ENCODE measurements at regions of chr6 and their contacts with region 1.

Region 1: GRCh38 chr6:137399881-137400443 is 94.2 kb downstream of the OLIG3 start:
- DNase-seq: no peak
- H3K4me3 Mint-ChIP-seq: no peak overlapping the region
- H3K27ac Mint-ChIP-seq: peak overlapping the region; percentile 38
- H3K4me1 Mint-ChIP-seq: peaks cover 18% of the 10 kb centered on the region
- H3K27me3 Mint-ChIP-seq: no peaks in the 10 kb centered on the region

Region 2: GRCh38 chr6:137363805-137364138 is 36.2 kb before region 1 on chr6:
- intact Hi-C with region 1: loop called (anchors 2 kb)
- DNase-seq: peak; percentile 13
- H3K4me3 Mint-ChIP-seq: peak overlapping the region; percentile 45
- H3K27ac Mint-ChIP-seq: peak overlapping the region; percentile 73
- H3K4me1 Mint-ChIP-seq: peaks cover 28% of the 10 kb centered on the region
- H3K27me3 Mint-ChIP-seq: peaks cover 2% of the 10 kb centered on the region

Region 3: GRCh38 chr6:137452333-137452894 is 52.5 kb after region 1 on chr6:
- intact Hi-C with region 1: no loop called
- DNase-seq: no peak
- H3K4me3 Mint-ChIP-seq: no peak overlapping the region
- H3K27ac Mint-ChIP-seq: no peak overlapping the region
- H3K4me1 Mint-ChIP-seq: no peaks in the 10 kb centered on the region
- H3K27me3 Mint-ChIP-seq: peaks cover 18% of the 10 kb centered on the region

Region 4: GRCh38 chr6:138440758-138441357 is 1040.9 kb after region 1 on chr6:
- intact Hi-C with region 1: no loop called
- DNase-seq: no peak
- H3K4me3 Mint-ChIP-seq: no peak overlapping the region
- H3K27ac Mint-ChIP-seq: no peak overlapping the region
- H3K4me1 Mint-ChIP-seq: no peaks in the 10 kb centered on the region
- H3K27me3 Mint-ChIP-seq: no peaks in the 10 kb centered on the region

Measured in activated T-helper 1 cell treated with anti-CD3 and anti-CD28 coated beads, Interleukin-12 subunit alpha, Interleukin-12 subunit beta, Interleukin-2, Interleukin-4 antibody, amounts not matched to agents 30 ng/mL and 10 ng/mL and 1 ng/mL, durations not matched to agents 14 hours and 24 hours and 36 hours (primary cell).